ENCODE measurements at regions of chr2 and their contacts with region 1.

Region 1: DNA sequence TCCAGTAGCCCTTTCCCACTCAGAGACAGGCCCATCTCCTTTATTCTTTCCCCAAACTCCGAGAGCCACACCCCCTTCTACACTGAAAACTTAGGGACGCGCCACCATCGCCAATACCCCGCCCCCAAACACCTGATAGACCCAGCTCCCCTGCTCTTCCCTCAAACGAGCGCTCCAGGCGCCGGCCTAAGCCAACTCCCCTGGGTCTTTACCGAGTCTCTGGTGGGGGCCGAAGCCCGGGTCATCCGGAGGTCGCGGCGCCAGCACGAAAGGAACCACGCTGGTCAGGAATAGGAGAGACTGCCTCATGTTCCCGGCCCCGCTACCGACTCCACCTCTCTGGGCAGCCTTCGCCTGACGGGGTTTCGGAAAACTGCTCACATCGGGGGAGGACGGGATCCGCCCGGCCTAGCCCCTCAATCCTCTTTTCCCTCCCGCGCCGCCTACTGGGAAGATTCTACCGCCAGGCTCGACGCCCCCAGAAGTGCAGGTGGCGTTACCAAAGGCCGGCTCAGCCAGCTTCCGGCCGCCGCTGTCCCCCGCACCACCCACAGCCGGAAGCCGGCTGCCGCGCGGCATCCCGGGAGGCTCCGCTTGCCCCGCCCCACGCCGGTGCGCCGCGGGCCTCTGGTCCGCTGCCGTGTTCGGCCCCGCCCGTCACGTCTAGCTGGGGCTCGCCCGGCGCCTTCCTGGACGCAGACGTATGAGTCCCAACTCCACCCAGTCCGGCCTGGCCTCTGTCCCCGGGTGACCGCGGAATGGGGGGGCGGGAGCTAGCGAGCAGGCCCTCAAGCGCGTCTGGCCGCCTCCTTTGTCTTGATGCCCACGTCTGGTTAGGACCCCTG is at the start of gene ADAM17:
- DNase-seq: peak; percentile 95
- ATAC-seq: peak; percentile 96
- H3K4me3 ChIP-seq: peak within 1 kb of the TSS; percentile 79 to 96 (median 88)
- H3K27ac ChIP-seq: peak within 1 kb of the TSS; percentile 98
- H3K4me1 ChIP-seq: peaks cover 36% of the 10 kb centered on the region
- H3K27me3 ChIP-seq: no peaks in the 10 kb centered on the region; a peak in 1 of 5 replicates
- CTCF ChIP-seq: peak; percentile 89
- EP300 ChIP-seq: peak in 1 of 2 experiments; percentile 44; a peak in 2 of 4 replicates
- POLR2A ChIP-seq: peak; percentile 71 to 92
- RAD21 ChIP-seq: peak; percentile 70
- total RNA-seq, gene ADAM17: 18.5 and 33.4 TPM in 2 replicates

Region 2: DNA sequence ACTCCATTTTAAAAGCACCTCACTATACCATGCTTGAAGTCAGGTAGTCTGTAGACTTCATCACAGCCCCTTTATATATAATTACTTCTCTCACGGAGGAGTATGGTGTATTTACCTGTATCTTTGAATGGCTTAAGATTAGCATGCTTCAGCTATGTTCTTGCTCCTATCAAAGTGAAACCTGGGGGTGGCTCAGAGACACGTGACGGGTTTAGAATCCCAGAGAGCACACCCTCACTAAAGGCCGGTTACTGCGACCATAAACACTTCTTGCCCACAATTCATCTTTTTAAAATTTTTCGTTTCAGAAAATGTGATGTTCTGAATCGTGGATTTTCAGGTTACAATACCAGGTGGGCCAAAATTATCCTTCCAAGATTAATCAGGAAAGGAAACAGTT is 77.6 kb before region 1 on chr2:
- CTCF ChIA-PET with region 1: no interaction called
- POLR2A ChIA-PET with region 1: interaction called, 5 read pairs
- in situ Hi-C with region 1: no loop called
- intact Hi-C with region 1: loop called (anchors 5 kb)
- DNase-seq: no peak
- ATAC-seq: no peak
- H3K4me3 ChIP-seq: no peak overlapping the region
- H3K27ac ChIP-seq: no peak overlapping the region
- H3K4me1 ChIP-seq: peaks cover 40% of the 10 kb centered on the region
- H3K27me3 ChIP-seq: no peaks in the 10 kb centered on the region
- CTCF ChIP-seq: no peak
- EP300 ChIP-seq: no peak
- POLR2A ChIP-seq: no peak
- RAD21 ChIP-seq: no peak

Region 3: GRCh38 chr2:9565436-9566153 is 10.1 kb after region 1 on chr2:
- CTCF ChIA-PET with region 1: no interaction called
- POLR2A ChIA-PET with region 1: interaction called, 18 read pairs
- in situ Hi-C with region 1: no loop called
- intact Hi-C with region 1: no loop called
- DNase-seq: no peak
- ATAC-seq: no peak
- H3K4me3 ChIP-seq: no peak overlapping the region
- H3K27ac ChIP-seq: no peak overlapping the region
- H3K4me1 ChIP-seq: no peaks in the 10 kb centered on the region; the same call in 1 of the 2 replicates
- H3K27me3 ChIP-seq: no peaks in the 10 kb centered on the region
- CTCF ChIP-seq: no peak
- EP300 ChIP-seq: no peak
- POLR2A ChIP-seq: no peak
- RAD21 ChIP-seq: no peak

Region 4: DNA sequence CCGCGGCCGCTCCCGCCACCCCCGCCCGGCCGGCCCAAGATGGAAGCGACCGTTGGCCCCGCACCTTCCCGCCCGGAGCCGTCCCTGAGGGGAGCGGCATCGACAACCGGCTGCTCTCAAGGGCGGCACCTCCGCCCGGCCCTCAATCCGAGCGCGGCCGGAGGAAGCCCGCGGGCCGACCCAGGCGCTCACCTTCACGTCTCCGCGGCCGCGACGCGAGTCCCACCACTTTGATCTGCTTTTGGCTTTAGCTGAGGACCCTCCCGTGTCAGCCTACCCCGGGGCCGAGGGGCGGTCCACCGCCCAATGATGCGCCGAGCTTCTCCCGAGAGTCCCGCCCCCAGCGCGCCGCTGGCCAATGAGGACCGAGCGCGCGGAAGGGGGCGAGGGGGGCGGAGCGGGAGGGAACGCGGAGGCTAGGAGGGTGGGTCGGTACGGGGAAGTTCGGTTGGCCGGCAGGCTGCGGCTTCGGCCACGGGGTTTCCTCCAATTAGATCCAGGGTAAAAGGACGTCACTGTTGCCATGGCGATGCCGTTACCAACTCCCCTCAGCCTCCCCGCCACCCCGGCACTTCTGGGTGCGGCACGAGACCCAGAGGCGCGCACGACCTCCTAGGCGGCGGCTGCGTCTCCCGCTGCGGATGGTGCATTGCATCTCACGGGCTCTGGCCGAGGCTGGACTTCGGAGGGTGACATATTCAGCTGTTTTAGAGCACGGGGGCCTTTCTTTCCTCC is 75.4 kb after region 1 on chr2 and contains the start of gene YWHAQ:
- CTCF ChIA-PET with region 1: no interaction called
- POLR2A ChIA-PET with region 1: interaction called, 70 read pairs
- in situ Hi-C with region 1: no loop called
- intact Hi-C with region 1: loop called (anchors 2 kb)
- DNase-seq: peak; percentile 97
- ATAC-seq: peak; percentile 93
- H3K4me3 ChIP-seq: peak within 1 kb of the TSS; percentile 85 to 100 (median 97)
- H3K27ac ChIP-seq: peak within 1 kb of the TSS; percentile 93
- H3K4me1 ChIP-seq: peaks cover 62% of the 10 kb centered on the region
- H3K27me3 ChIP-seq: peaks cover 0 to 25% of the 10 kb centered on the region in 2 experiments; a peak in 3 of 5 replicates
- CTCF ChIP-seq: no peak
- EP300 ChIP-seq: peak; percentile 55 to 75; a peak in 2 of 4 replicates
- POLR2A ChIP-seq: peak; percentile 96 to 99
- RAD21 ChIP-seq: peak; percentile 20; the same call in 1 of the 2 replicates
- total RNA-seq, gene YWHAQ: 304 and 420 TPM in 2 replicates

Region 5: GRCh38 chr2:10036095-10036884 is 480.8 kb after region 1 on chr2:
- CTCF ChIA-PET with region 1: no interaction called
- POLR2A ChIA-PET with region 1: no interaction called
- in situ Hi-C with region 1: no loop called
- intact Hi-C with region 1: no loop called
- DNase-seq: no peak
- ATAC-seq: peak; percentile 70
- H3K4me3 ChIP-seq: no peak overlapping the region
- H3K27ac ChIP-seq: no peak overlapping the region
- H3K4me1 ChIP-seq: peaks cover 33% of the 10 kb centered on the region
- H3K27me3 ChIP-seq: peaks cover 7 to 64% of the 10 kb centered on the region in 2 experiments
- CTCF ChIP-seq: peak; percentile 59
- EP300 ChIP-seq: no peak
- POLR2A ChIP-seq: no peak
- RAD21 ChIP-seq: peak; percentile 34; the same call in 1 of the 2 replicates

Measured in HepG2 (cell line).